ENCODE measurements at regions of chr5 and their contacts with region 1.

Region 1: DNA sequence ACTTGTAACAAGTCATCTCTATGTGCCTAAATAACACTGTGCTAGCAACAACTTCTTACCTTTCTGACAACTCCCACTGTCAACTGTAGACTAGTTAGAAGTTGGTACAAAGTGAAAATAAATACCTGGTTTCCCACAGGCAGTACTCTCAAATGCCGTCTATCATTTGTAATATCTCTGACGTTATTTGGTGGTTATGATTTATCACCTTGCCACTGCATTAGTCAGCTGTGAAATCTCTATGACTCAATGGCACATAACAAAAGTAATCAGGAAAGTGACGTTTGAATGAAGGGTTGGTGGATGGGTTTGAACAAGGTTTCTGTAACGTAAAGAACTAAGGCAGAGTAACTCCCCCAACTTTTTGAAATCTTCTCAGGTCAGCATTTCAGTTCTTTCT is 592.3 kb downstream of the MAT2B start:
- DNase-seq: no peak
- ATAC-seq: no peak
- H3K4me3 ChIP-seq: no peak overlapping the region
- H3K4me3 Mint-ChIP-seq: no peak overlapping the region
- H3K27ac ChIP-seq: no peak overlapping the region
- H3K27ac Mint-ChIP-seq: no peak overlapping the region
- H3K4me1 ChIP-seq: no peaks in the 10 kb centered on the region
- H3K4me1 Mint-ChIP-seq: no peaks in the 10 kb centered on the region
- H3K27me3 ChIP-seq: no peaks in the 10 kb centered on the region
- H3K27me3 Mint-ChIP-seq: no peaks in the 10 kb centered on the region
- CTCF ChIP-seq: no peak

Region 2: GRCh38 chr5:163718272-163718671 is 379.5 kb before region 1 on chr5:
- CTCF ChIA-PET with region 1: no interaction called
- POLR2A ChIA-PET with region 1: no interaction called
- intact Hi-C with region 1: no loop called
- DNase-seq: no peak
- ATAC-seq: no peak
- H3K4me3 ChIP-seq: no peak overlapping the region
- H3K4me3 Mint-ChIP-seq: no peak overlapping the region
- H3K27ac ChIP-seq: no peak overlapping the region
- H3K27ac Mint-ChIP-seq: no peak overlapping the region
- H3K4me1 ChIP-seq: no peaks in the 10 kb centered on the region
- H3K4me1 Mint-ChIP-seq: no peaks in the 10 kb centered on the region
- H3K27me3 ChIP-seq: no peaks in the 10 kb centered on the region
- H3K27me3 Mint-ChIP-seq: peaks cover 6% of the 10 kb centered on the region
- CTCF ChIP-seq: no peak

Region 3: DNA sequence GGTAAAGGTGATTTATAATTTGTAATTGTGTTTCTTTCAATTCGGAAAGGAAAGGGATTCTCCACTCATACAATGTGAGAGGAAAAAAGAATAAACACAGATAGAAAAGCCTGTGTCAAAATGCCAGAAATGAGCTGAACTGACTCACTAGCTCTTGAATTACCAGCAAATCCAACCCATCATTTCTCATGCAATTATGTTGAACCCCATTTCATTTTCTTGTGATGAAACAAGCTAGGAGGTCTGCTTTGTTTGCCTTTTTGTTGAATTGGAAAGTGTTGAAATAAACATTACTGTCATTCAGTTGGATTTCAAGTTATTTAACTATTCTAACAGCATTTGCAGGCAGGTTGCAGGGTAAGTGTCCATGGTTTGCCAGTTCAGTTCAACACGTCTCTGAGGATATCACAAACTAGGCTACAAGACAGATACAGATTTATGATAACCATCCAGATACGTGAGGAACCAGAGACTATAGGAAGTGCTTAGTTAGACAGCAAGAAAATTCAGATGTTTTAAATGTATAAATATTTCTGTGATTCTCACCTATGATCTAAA is 45.1 kb before region 1 on chr5:
- CTCF ChIA-PET with region 1: no interaction called
- POLR2A ChIA-PET with region 1: no interaction called
- intact Hi-C with region 1: loop called (anchors 10 kb)
- DNase-seq: no peak
- ATAC-seq: no peak
- H3K4me3 ChIP-seq: no peak overlapping the region
- H3K4me3 Mint-ChIP-seq: no peak overlapping the region
- H3K27ac ChIP-seq: no peak overlapping the region
- H3K27ac Mint-ChIP-seq: no peak overlapping the region
- H3K4me1 ChIP-seq: no peaks in the 10 kb centered on the region
- H3K4me1 Mint-ChIP-seq: no peaks in the 10 kb centered on the region
- H3K27me3 ChIP-seq: no peaks in the 10 kb centered on the region
- H3K27me3 Mint-ChIP-seq: peaks cover 7% of the 10 kb centered on the region
- CTCF ChIP-seq: no peak